ENCODE measurements at regions of chr3 and their contacts with region 1.

Region 1: DNA sequence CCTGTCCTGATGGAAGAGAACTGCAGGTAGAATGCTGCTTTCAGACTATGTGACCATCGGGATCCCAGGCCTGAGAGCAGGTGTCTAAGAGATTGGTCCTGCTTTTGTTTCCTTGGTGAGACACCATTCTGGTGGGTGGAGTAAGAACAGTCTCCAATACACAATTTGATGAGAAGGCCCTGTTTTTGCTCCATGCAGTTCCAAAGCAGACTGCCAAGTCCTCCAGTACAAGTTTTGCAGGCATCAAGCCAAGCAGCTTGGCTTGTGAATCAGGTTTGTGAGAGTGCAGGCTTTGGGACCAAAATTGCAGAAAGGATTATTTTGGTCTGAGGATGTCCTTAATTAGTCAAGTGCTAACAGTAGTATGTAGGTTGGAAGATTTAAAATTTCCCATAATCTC is 381.6 kb downstream of the FOXP1 start:
- DNase-seq: no peak
- ATAC-seq: no peak
- H3K4me3 ChIP-seq: no peak overlapping the region
- H3K4me3 Mint-ChIP-seq: no peak overlapping the region
- H3K27ac ChIP-seq: no peak overlapping the region
- H3K27ac Mint-ChIP-seq: peak overlapping the region in 6 of 9 donors; percentile 11 to 82 (median 34)
- H3K4me1 ChIP-seq: peaks cover 0 to 20% of the 10 kb centered on the region in 2 donors
- H3K4me1 Mint-ChIP-seq: peaks cover 2 to 80% (median 72%) of the 10 kb centered on the region in 7 donors
- H3K27me3 ChIP-seq: no peaks in the 10 kb centered on the region
- H3K27me3 Mint-ChIP-seq: no peaks in the 10 kb centered on the region

Region 2: DNA sequence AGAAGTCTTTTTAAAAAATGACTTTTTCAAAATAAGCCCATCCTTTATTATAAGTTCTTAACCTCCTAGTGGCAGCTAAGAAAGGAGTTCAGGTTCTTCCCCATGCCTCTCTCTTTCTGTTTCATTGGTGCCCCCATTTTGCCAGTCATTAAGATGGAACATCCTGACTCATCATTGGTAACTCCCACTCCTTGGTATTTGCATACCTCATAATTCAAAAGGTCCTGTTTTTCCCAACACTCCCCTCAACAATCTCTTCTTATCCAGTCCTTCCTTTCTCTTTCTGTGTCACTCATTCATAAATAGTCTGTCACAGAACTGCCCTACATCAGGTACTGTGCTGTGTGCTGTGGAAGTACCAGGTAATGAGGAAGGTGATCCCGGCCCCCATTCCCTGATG is 12.5 kb before region 1 on chr3:
- CTCF ChIA-PET with region 1: no interaction called
- POLR2A ChIA-PET with region 1: no interaction called
- intact Hi-C with region 1: loop called in 1 of 2 experiments (anchors 2 kb)
- DNase-seq: no peak
- ATAC-seq: no peak
- H3K4me3 ChIP-seq: no peak overlapping the region
- H3K4me3 Mint-ChIP-seq: peak overlapping the region in 1 of 10 donors; percentile 24
- H3K27ac ChIP-seq: no peak overlapping the region
- H3K27ac Mint-ChIP-seq: peak overlapping the region in 8 of 9 donors; percentile 17 to 78 (median 67)
- H3K4me1 ChIP-seq: peaks cover 0 to 5% of the 10 kb centered on the region in 2 donors
- H3K4me1 Mint-ChIP-seq: peaks cover 24 to 91% (median 83%) of the 10 kb centered on the region in 7 donors
- H3K27me3 ChIP-seq: no peaks in the 10 kb centered on the region
- H3K27me3 Mint-ChIP-seq: no peaks in the 10 kb centered on the region

Region 3: GRCh38 chr3:71219744-71220638 is 18.1 kb after region 1 on chr3:
- CTCF ChIA-PET with region 1: no interaction called
- POLR2A ChIA-PET with region 1: no interaction called
- intact Hi-C with region 1: loop called in 1 of 2 experiments (anchors 1 kb)
- DNase-seq: peak in 2 of 9 donors; percentile 25 to 33
- ATAC-seq: peak; percentile 55
- H3K4me3 ChIP-seq: no peak overlapping the region
- H3K4me3 Mint-ChIP-seq: peak overlapping the region in 5 of 10 donors; percentile 11 to 40 (median 16)
- H3K27ac ChIP-seq: no peak overlapping the region
- H3K27ac Mint-ChIP-seq: peak overlapping the region in 7 of 9 donors; percentile 5 to 88 (median 80)
- H3K4me1 ChIP-seq: peaks cover 0 to 6% of the 10 kb centered on the region in 2 donors
- H3K4me1 Mint-ChIP-seq: peaks cover 14 to 84% (median 81%) of the 10 kb centered on the region in 7 donors
- H3K27me3 ChIP-seq: no peaks in the 10 kb centered on the region
- H3K27me3 Mint-ChIP-seq: peaks cover 0 to 23% (median 0%) of the 10 kb centered on the region in 5 donors

Region 4: DNA sequence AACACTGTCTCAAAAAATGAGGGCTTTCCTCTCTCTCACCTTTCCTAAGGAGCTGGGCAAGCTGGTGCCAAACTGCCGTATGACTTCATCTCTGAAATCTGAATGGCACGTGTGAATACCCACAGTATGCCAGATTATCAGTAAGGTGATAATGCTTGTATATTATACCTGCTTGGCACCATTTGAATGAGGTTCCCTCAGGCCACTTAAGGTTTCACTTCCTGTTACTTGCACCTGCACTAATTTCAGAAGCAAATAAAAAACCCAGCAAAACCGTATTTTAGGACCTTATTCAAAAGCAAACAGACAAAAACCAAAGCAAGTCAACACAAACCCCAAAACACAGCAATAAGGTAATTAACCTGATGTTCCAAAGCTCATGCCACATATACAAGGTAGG is 361.9 kb after region 1 on chr3:
- CTCF ChIA-PET with region 1: no interaction called
- POLR2A ChIA-PET with region 1: interaction called, 10 read pairs
- intact Hi-C with region 1: no loop called
- DNase-seq: no peak
- ATAC-seq: no peak
- H3K4me3 ChIP-seq: no peak overlapping the region
- H3K4me3 Mint-ChIP-seq: no peak overlapping the region
- H3K27ac ChIP-seq: no peak overlapping the region
- H3K27ac Mint-ChIP-seq: no peak overlapping the region
- H3K4me1 ChIP-seq: peaks cover 0 to 4% of the 10 kb centered on the region in 2 donors
- H3K4me1 Mint-ChIP-seq: peaks cover 4 to 24% (median 10%) of the 10 kb centered on the region in 7 donors
- H3K27me3 ChIP-seq: no peaks in the 10 kb centered on the region
- H3K27me3 Mint-ChIP-seq: no peaks in the 10 kb centered on the region